Astrocyte of the cerebellum (primary cell): ENCODE measurements at regions of chr1 and their contacts with region 1.

Region 1: GRCh38 chr1:243926803-243927279 is 76.8 kb upstream of the AKT3 start:
- DNase-seq: peak; percentile 95
- H3K4me3 ChIP-seq: no peak overlapping the region
- CTCF ChIP-seq: no peak

Region 2: DNA sequence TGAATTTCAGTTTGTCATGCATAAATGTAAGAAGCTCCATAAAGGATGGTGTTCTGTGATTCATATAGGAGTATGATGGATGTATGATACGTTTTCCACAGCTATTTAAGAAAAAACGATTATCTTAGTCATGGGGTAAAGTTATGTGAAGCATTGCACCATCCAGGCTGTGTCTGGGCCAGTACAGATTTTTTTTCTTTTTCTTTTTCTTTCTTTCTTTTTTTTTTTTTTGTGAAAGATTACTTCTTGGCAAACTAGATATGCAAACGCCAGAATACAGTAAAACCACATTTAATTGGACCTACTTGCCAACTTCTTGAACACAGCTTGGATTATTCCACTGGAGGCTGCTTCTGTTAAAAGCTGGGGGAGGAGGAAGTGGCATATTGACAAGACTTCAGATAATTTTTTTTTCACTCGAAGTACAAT is 139.1 kb after region 1 on chr1:
- in situ Hi-C with region 1: loop called (anchors 10 kb)
- DNase-seq: peak; percentile 85
- H3K4me3 ChIP-seq: no peak overlapping the region
- CTCF ChIP-seq: no peak